Endothelial cell of umbilical vein (primary cell): ENCODE measurements at regions of chr3 and their contacts with region 1.

Region 1: DNA sequence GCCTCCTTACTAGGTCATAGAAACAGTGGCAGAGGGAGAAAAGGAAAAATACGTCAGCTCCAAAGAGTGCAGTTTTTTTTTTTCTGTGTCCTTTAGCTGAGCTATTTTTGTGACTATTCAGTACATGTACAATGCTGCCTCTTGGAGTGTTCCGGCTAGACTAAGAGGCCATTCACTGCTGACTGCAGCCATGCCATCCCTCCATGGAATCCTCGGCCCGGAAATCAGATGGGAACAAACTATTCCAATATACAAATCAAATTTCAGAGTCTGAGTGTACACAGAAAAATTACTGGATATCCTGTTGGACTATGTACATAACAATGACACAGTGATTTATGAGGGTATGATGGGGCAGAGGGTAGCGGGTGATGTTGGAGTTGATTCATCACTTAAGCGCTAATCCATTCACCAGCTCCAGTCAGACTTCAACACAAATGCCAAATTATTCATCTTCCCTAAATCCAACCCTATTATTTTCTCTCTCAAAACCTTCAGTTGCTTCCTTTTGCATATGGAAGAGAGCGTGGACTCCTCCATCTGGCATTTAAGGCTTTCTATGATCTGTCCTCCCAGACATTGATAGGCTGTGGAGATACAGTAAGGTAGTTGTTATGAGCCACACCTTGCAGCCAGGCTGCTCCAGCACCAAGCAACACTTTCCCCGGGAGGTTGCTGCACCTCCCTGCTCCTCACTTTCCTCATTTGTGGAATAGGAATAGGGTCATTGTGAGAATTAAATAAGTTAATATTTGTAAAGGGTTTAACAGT is 109.1 kb downstream of the LPP start:
- DNase-seq: peak; percentile 97
- H3K4me3 ChIP-seq: no peak overlapping the region
- H3K27ac ChIP-seq: peak overlapping the region; percentile 88
- H3K4me1 ChIP-seq: peaks cover 79% of the 10 kb centered on the region
- H3K27me3 ChIP-seq: no peaks in the 10 kb centered on the region
- CTCF ChIP-seq: no peak
- POLR2A ChIP-seq: peak; percentile 65

Region 2: GRCh38 chr3:188000361-188000861 is 262.7 kb before region 1 on chr3:
- CTCF ChIA-PET with region 1: no interaction called
- POLR2A ChIA-PET with region 1: no interaction called
- dilution Hi-C with region 1: no loop called
- intact Hi-C with region 1: no loop called
- DNase-seq: no peak
- H3K4me3 ChIP-seq: no peak overlapping the region
- H3K27ac ChIP-seq: no peak overlapping the region
- H3K4me1 ChIP-seq: peaks cover 7% of the 10 kb centered on the region
- H3K27me3 ChIP-seq: no peaks in the 10 kb centered on the region
- CTCF ChIP-seq: no peak
- POLR2A ChIP-seq: no peak

Region 3: GRCh38 chr3:188283347-188283746 is 20.2 kb after region 1 on chr3:
- CTCF ChIA-PET with region 1: no interaction called
- POLR2A ChIA-PET with region 1: no interaction called
- dilution Hi-C with region 1: no loop called
- intact Hi-C with region 1: no loop called
- DNase-seq: no peak
- H3K4me3 ChIP-seq: no peak overlapping the region
- H3K27ac ChIP-seq: no peak overlapping the region
- H3K4me1 ChIP-seq: peaks cover 12% of the 10 kb centered on the region
- H3K27me3 ChIP-seq: no peaks in the 10 kb centered on the region
- CTCF ChIP-seq: no peak
- POLR2A ChIP-seq: no peak

Region 4: DNA sequence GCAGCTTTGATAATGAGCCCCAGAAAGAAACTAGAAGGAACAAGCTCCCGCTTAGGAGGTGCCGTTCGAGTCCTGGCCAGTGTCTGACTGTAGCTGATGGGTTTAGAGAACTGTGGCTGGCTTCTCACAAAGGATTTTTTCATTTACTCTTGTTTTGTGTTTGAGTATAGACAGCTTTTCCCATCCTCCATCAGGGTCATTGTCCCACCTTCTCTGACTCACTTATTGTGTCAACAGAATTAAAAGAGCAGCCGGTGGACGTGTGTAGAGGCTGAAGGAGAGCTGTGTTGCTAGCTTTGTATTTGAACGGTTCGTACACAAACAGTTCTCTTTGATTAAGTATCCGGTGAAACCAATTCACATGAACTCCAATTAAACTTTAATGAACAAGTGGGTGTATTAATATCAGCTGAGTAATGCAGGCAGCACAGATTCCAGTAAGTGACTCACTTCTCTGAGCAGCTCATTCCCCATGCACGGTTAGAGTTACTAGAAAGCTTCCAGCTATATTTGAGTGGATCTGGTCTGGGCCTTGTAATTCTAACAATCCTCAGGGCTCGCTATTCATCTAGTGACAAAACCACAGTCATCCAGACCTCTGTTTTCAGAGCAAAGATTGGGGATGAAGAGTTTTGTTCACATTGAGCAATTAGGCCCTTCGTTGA is 31.9 kb after region 1 on chr3:
- CTCF ChIA-PET with region 1: interaction called, 6 read pairs
- POLR2A ChIA-PET with region 1: no interaction called
- dilution Hi-C with region 1: no loop called
- intact Hi-C with region 1: loop called (anchors 1 kb)
- DNase-seq: peak; percentile 95
- H3K4me3 ChIP-seq: no peak overlapping the region
- H3K27ac ChIP-seq: peak overlapping the region; percentile 63
- H3K4me1 ChIP-seq: peaks cover 49% of the 10 kb centered on the region
- H3K27me3 ChIP-seq: no peaks in the 10 kb centered on the region
- CTCF ChIP-seq: no peak
- POLR2A ChIP-seq: no peak

Region 5: GRCh38 chr3:188362405-188362831 is 99.3 kb after region 1 on chr3:
- CTCF ChIA-PET with region 1: no interaction called
- POLR2A ChIA-PET with region 1: no interaction called
- dilution Hi-C with region 1: no loop called
- intact Hi-C with region 1: loop called (anchors 1 kb)
- DNase-seq: peak; percentile 84
- H3K4me3 ChIP-seq: no peak overlapping the region
- H3K27ac ChIP-seq: peak overlapping the region; percentile 66
- H3K4me1 ChIP-seq: peaks cover 36% of the 10 kb centered on the region
- H3K27me3 ChIP-seq: no peaks in the 10 kb centered on the region
- CTCF ChIP-seq: no peak
- POLR2A ChIP-seq: no peak

Region 6: DNA sequence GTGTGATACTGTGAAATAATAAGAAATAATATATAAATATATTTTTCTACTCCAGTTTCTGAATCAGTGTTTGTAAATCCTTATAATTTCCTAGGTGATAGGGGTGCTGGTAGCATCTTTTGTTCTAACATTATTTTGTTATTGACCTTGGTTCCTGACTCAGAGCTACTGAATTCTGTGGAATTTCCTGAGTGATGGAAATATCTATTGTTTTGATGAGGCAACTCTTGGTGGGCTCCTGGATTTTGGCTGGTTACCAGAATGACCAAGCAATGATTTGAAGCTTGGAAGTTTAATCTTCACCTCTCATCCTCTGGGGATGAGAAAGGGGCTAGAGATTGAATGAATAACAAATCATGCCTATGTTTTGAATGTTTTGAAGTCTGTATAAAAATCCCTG is 268.1 kb after region 1 on chr3:
- CTCF ChIA-PET with region 1: no interaction called
- POLR2A ChIA-PET with region 1: no interaction called
- dilution Hi-C with region 1: no loop called
- intact Hi-C with region 1: loop called (anchors 2 kb)
- DNase-seq: peak; percentile 87
- H3K4me3 ChIP-seq: no peak overlapping the region
- H3K27ac ChIP-seq: peak overlapping the region; percentile 85
- H3K4me1 ChIP-seq: peaks cover 37% of the 10 kb centered on the region
- H3K27me3 ChIP-seq: no peaks in the 10 kb centered on the region
- CTCF ChIP-seq: no peak
- POLR2A ChIP-seq: no peak

Region 7: DNA sequence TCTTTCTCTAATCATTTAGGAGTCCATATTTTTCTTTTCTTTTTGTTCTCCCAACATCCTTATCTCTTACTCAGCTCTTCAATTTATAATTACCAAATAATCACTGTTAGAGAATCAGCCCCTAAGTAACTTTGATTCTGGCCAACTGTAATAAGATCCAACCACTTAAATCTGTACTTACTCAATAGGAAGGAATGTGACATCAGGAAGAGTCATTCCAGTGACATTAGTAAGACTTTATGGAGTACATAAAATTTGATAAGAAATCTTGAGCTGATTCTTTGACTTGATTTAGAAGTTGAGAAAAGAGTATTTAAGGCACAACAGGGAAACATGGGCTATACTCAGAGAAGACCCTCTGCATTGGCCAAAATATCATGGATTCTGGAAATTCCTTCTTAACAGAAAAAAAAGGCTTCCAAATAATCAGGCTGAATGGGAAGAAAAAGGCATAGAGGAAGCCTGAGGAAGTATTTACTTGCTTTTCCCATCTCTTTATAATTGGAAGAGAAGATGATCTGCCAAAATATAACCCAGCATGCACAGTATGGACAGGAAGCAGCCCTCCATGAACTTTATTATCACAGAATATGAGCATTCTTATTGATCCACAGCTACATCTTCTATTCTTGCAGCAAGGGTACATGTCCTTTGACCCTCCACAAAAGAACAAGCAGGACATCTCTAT is 619.0 kb after region 1 on chr3:
- CTCF ChIA-PET with region 1: no interaction called
- POLR2A ChIA-PET with region 1: no interaction called
- dilution Hi-C with region 1: no loop called
- intact Hi-C with region 1: loop called (anchors 5 kb)
- DNase-seq: peak; percentile 70
- H3K4me3 ChIP-seq: no peak overlapping the region
- H3K27ac ChIP-seq: peak overlapping the region; percentile 74
- H3K4me1 ChIP-seq: peaks cover 37% of the 10 kb centered on the region
- H3K27me3 ChIP-seq: no peaks in the 10 kb centered on the region
- CTCF ChIP-seq: no peak
- POLR2A ChIP-seq: no peak

Region 8: GRCh38 chr3:188947401-188948280 is 684.5 kb after region 1 on chr3:
- CTCF ChIA-PET with region 1: interaction called, 12 read pairs
- POLR2A ChIA-PET with region 1: no interaction called
- dilution Hi-C with region 1: no loop called
- intact Hi-C with region 1: loop called (anchors 1 kb)
- DNase-seq: peak; percentile 84
- H3K4me3 ChIP-seq: peak overlapping the region in 2 of 3 experiments; percentile 27 to 32
- H3K27ac ChIP-seq: peak overlapping the region; percentile 97
- H3K4me1 ChIP-seq: peaks cover 45% of the 10 kb centered on the region
- H3K27me3 ChIP-seq: no peaks in the 10 kb centered on the region
- CTCF ChIP-seq: peak; percentile 19 to 29
- POLR2A ChIP-seq: no peak